ENCODE measurements at regions of chr3 and their contacts with region 1.

Region 1: GRCh38 chr3:197906023-197906849 is 43.8 kb upstream of the RPL35A start:
- DNase-seq: peak; percentile 93
- H3K4me3 Mint-ChIP-seq: peak overlapping the region; percentile 35
- H3K27ac Mint-ChIP-seq: peak overlapping the region; percentile 87
- H3K4me1 Mint-ChIP-seq: peaks cover 27% of the 10 kb centered on the region
- H3K27me3 Mint-ChIP-seq: no peaks in the 10 kb centered on the region

Region 2: DNA sequence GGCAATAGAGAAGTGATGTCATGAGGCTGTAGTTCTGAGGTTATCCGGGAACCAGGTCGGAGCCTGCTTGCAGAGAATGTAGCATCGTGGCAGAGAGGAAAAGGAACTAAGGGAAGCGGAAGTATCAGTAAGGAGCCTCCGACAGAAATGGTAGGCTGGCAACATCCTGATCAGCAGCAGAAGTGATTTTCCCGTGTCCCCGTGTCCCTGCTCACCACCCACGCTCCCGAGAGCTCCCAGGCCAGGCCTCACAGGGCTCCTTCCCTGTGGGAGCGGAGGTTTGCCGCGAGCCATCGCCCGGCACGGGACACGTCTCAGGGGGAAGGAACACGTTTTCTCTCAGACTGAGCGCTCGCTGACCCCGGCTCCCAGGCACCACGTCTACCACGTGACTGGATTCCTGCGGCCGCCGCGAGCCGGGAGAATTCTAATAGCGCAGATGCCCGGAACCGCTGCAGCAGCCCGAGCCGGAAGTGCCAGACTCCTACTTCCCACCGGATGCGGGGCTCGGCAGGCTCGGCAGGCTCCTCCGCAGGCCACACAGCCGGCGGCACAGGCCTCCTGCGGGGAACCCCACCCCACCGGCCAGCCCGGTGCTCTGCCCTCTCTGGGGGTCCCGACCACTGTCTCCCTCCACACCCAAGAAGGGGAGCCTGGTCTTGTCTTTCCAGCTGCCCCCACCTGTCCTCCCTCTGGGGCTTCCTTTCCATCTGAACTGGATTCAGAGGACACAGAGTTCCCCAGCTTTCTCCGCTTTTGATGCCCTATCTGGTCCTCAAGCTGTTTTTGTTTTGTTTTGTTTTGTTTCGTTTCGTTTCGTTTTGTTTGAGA is 449.8 kb before region 1 on chr3:
- CTCF ChIA-PET with region 1: no interaction called
- POLR2A ChIA-PET with region 1: no interaction called
- intact Hi-C with region 1: no loop called
- DNase-seq: peak; percentile 67
- H3K4me3 Mint-ChIP-seq: peak overlapping the region; percentile 77
- H3K27ac Mint-ChIP-seq: peak overlapping the region; percentile 83
- H3K4me1 Mint-ChIP-seq: peaks cover 12% of the 10 kb centered on the region
- H3K27me3 Mint-ChIP-seq: peaks cover 3% of the 10 kb centered on the region

Region 3: GRCh38 chr3:197858598-197858997 is 47.6 kb before region 1 on chr3:
- CTCF ChIA-PET with region 1: interaction called, 10 read pairs
- POLR2A ChIA-PET with region 1: no interaction called
- intact Hi-C with region 1: no loop called
- DNase-seq: no peak
- H3K4me3 Mint-ChIP-seq: no peak overlapping the region
- H3K27ac Mint-ChIP-seq: no peak overlapping the region
- H3K4me1 Mint-ChIP-seq: peaks cover 4% of the 10 kb centered on the region
- H3K27me3 Mint-ChIP-seq: no peaks in the 10 kb centered on the region

Region 4: DNA sequence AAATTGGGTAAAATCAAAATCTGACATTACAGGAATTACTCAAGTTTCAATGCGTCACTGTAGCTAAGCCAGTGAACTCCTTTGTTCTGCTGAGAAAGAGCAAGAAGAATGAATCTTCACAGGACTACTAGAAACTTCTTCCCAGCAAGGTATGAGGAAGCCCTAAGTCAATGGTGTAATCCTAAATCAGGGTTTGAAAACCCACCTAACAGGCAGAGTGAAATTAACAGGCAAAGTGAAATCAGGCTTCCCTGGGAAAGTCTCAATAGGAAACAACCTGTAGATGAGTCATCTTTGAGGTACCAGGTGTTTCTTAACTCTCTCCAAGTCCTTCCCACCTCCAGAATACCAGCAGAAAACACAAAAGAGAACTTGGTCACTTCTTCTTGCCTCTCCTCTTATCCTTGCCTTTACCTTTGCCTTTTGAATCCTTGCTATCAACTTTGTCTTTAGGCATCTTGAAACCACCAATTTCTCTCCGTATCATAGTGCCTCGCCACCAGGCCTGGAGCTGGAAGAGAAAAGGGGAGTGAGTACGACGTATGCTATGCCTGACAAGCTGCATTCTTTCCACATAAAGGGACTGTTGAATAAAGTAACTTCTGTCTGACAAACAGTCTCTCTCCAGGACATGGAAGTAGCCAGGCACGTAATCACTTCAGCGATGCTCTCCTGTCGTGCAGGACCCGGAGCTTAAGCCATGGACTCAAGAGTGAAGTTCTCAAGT is 16.9 kb before region 1 on chr3:
- CTCF ChIA-PET with region 1: interaction called, 9 read pairs
- POLR2A ChIA-PET with region 1: interaction called, 8 read pairs
- intact Hi-C with region 1: loop called (anchors 1 kb)
- DNase-seq: no peak
- H3K4me3 Mint-ChIP-seq: no peak overlapping the region
- H3K27ac Mint-ChIP-seq: peak overlapping the region; percentile 36
- H3K4me1 Mint-ChIP-seq: peaks cover 17% of the 10 kb centered on the region
- H3K27me3 Mint-ChIP-seq: no peaks in the 10 kb centered on the region

Region 5: DNA sequence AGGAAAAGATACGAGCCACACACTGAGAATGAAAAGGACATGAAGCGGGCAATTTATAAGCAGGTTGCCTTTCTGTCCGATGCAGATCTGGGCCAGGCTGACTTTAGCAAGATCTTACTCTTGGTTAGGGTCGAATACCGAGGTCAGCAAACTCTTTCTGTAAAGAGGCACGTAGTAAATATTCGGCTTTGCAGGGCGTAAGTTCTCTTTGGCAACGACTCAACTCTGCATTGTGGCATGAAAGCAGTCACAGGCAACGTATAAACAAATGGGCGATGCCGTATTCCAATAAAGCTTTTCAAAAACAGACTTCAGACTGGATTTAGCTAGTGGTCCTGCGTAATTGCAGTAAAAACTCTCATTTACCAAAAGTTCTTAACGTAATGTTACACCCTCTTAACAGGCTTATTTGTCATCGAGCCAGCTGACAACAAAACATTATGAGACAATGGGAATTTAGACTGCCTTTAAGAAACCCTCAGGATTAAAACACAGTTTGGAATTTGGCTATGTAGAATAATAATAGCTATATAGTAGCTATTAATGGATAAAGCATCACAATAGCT is 30.7 kb after region 1 on chr3:
- CTCF ChIA-PET with region 1: interaction called, 44 read pairs
- POLR2A ChIA-PET with region 1: interaction called, 5 read pairs
- intact Hi-C with region 1: loop called (anchors 1 kb)
- DNase-seq: no peak
- H3K4me3 Mint-ChIP-seq: no peak overlapping the region
- H3K27ac Mint-ChIP-seq: no peak overlapping the region
- H3K4me1 Mint-ChIP-seq: peaks cover 5% of the 10 kb centered on the region
- H3K27me3 Mint-ChIP-seq: no peaks in the 10 kb centered on the region

Region 6: GRCh38 chr3:197949754-197950660 is 43.8 kb after region 1 on chr3 and contains the start of gene RPL35A:
- CTCF ChIA-PET with region 1: interaction called, 21 read pairs
- POLR2A ChIA-PET with region 1: interaction called, 5 read pairs
- intact Hi-C with region 1: loop called (anchors 2 kb)
- DNase-seq: peak; percentile 88
- H3K4me3 Mint-ChIP-seq: peak within 1 kb of the TSS; percentile 93
- H3K27ac Mint-ChIP-seq: peak within 1 kb of the TSS; percentile 97
- H3K4me1 Mint-ChIP-seq: peaks cover 43% of the 10 kb centered on the region
- H3K27me3 Mint-ChIP-seq: no peaks in the 10 kb centered on the region
- total RNA-seq, gene RPL35A: 1,575 to 1,587 TPM

Region 7: GRCh38 chr3:198071602-198072285 is 165.5 kb after region 1 on chr3:
- CTCF ChIA-PET with region 1: interaction called, 11 read pairs
- POLR2A ChIA-PET with region 1: no interaction called
- intact Hi-C with region 1: loop called (anchors 1 kb)
- DNase-seq: peak; percentile 73
- H3K4me3 Mint-ChIP-seq: no peak overlapping the region
- H3K27ac Mint-ChIP-seq: peak overlapping the region; percentile 88
- H3K4me1 Mint-ChIP-seq: peaks cover 28% of the 10 kb centered on the region
- H3K27me3 Mint-ChIP-seq: peaks cover 7% of the 10 kb centered on the region